K562 (cell line): ENCODE measurements at regions of chr19 and their contacts with region 1.

Region 1: GRCh38 chr19:12913851-12914690 is 5.0 kb downstream of the SYCE2 start:
- DNase-seq: peak in 1 of 4 experiments; percentile 11
- ATAC-seq: peak; percentile 16; the same call in 2 of the 3 replicates
- H3K4me3 ChIP-seq: no peak overlapping the region
- H3K27ac ChIP-seq: peak overlapping the region; percentile 24; the same call in 1 of the 3 replicates
- H3K4me1 ChIP-seq: peaks cover 17 to 22% of the 10 kb centered on the region in 2 experiments
- H3K27me3 ChIP-seq: no peaks in the 10 kb centered on the region
- CTCF ChIP-seq: no peak
- EP300 ChIP-seq: no peak
- POLR2A ChIP-seq: no peak
- RAD21 ChIP-seq: no peak

Region 2: DNA sequence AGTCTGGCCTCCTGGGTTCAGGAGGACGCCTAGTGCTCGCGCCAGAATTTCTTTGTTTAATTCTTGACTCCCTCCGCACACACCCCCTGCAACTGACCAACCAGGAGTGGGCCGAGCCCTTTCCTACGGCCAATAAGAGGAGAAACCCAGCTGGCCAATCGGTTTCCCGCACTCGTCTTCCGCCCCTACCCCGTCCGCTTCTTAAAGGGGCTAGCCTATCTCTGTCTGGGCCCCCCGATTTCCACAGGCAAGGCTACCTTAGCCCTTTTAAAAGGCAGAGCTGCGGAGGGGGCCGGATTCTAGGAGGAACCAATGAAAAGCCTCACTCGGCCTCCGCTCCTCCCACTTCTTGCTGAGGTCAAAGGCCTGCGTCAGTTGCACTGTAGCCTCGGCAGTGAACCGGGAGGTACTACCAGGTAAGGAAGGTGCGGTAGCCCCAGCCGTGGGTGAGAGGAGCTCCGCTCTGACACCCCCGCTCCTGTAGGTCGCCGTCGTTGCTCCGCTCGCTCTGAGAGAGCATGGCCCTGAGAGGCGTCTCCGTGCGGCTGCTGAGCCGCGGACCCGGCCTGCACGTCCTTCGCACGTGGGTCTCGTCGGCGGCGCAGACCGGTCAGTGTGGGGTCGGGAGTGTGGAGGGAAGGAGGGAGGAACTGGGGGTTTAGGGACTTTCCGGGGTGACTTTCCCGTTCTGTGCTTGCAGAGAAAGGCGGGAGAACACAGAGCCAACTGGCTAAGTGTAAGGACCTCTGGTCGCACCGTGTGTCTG is 23.1 kb before region 1 on chr19 and contains the start of gene GCDH:
- CTCF ChIA-PET with region 1: no interaction called
- POLR2A ChIA-PET with region 1: interaction called, 8 read pairs
- in situ Hi-C with region 1: no loop called
- intact Hi-C with region 1: loop called (anchors 1 kb)
- DNase-seq: peak; percentile 90 to 99 (median 95)
- ATAC-seq: peak; percentile 91
- H3K4me3 ChIP-seq: peak within 1 kb of the TSS; percentile 88
- H3K27ac ChIP-seq: peak within 1 kb of the TSS; percentile 68
- H3K4me1 ChIP-seq: peaks cover 15 to 50% of the 10 kb centered on the region in 2 experiments; a peak in 4 of 5 replicates
- H3K27me3 ChIP-seq: no peaks in the 10 kb centered on the region
- CTCF ChIP-seq: peak in 2 of 3 experiments; percentile 20 to 47; a peak in 2 of 6 replicates
- EP300 ChIP-seq: 0 out of 2 replicates have a peak, but pooled peaks have one; percentile 13
- POLR2A ChIP-seq: peak; percentile 82
- RAD21 ChIP-seq: 0 out of 4 replicates have a peak, but pooled peaks of 1 of the 2 experiments have one; percentile 34
- polyA plus RNA-seq, gene GCDH: 2.9 to 5.5 TPM

Region 3: DNA sequence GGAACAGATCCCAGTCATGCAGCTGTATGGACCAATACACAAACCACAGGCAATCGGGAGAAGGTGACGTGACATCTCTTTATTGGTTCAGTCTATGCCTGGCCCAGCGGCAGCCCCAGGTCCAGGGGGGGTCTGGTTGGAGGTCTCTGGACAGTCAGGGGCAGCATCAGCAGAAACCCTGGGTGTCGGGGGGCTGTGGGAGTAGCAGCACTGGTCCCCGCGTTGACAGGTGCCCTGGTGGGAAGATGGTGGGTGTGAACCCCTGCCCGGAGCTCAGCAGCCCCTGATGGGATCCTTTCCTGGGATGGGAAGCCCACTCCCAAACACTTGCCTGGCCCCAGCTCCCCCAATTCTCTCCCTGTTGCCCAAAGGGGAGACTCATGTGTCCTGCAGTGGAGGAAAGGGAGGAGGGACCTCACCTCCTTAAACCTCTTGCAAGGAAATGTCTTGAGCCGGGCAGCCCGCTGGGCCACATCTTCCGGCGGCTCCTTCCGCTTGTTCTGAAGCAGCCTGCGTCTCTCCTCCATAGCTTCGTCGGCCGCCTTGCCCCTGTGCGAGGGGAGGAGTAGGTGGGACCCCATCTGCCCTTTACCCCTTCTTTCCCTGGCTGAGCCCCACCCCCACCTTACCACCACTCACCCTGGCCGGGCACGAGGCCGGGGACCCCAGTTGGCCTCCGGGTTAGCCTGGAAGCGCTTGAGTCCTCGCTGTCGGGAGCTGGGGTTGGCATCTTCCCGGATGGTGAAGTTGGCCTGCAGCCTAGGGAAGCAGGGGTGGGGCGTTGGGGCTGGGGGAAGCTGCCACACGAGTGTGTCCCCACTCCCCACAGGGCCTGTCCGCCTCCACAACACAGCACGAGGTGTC is 191.0 kb after region 1 on chr19:
- CTCF ChIA-PET with region 1: no interaction called
- POLR2A ChIA-PET with region 1: no interaction called
- in situ Hi-C with region 1: no loop called
- intact Hi-C with region 1: no loop called
- DNase-seq: no peak
- ATAC-seq: no peak
- H3K4me3 ChIP-seq: no peak overlapping the region
- H3K27ac ChIP-seq: peak overlapping the region; percentile 98
- H3K4me1 ChIP-seq: peaks cover 16 to 48% of the 10 kb centered on the region in 2 experiments
- H3K27me3 ChIP-seq: no peaks in the 10 kb centered on the region
- CTCF ChIP-seq: peak in 1 of 3 experiments; percentile 32; a peak in 1 of 6 replicates
- EP300 ChIP-seq: no peak
- POLR2A ChIP-seq: no peak
- RAD21 ChIP-seq: no peak